ENCODE measurements at regions of chr17 and their contacts with region 1.

Region 1: DNA sequence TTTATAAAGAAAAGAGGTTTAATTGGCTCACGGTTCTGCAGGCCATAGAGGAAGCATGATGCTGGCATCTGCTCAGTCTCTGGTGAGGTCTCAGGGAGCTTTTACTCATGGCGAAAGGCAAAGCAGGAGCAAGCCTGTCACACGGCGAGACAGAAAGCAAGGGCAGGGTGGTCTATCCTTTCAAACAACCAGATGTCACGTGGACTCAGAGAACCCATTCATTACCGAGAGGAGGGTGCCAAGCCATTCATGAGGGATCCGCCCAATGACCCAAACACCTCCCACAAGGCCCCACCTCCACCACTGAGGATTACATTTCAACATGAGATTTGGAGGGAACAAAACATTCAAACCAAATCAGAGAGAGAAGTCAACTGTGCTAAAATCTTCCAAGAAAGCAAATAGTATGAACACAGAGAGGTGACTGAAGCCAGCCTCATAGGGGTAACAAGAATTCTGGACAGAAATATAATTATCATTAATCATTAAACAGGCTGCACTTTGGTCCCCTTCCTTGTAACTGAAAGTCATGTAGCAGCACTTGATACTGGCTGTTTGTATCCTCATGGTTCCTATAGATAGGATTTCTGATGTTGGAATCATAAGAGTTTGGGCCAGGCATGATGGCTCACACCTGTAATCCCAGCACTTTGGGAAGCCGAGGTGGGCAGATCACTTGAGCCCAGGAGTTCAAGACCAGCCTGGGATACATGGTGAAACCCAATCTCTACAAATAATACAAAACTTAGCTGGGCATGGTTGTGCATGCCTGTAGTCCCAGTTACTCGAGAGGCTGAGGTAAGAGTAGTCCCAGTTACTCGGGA is 52.5 kb upstream of the B4GALNT2 start:
- DNase-seq: no peak

Region 2: GRCh38 chr17:49016788-49017463 is 63.1 kb before region 1 on chr17:
- intact Hi-C with region 1: no loop called
- DNase-seq: no peak

Region 3: DNA sequence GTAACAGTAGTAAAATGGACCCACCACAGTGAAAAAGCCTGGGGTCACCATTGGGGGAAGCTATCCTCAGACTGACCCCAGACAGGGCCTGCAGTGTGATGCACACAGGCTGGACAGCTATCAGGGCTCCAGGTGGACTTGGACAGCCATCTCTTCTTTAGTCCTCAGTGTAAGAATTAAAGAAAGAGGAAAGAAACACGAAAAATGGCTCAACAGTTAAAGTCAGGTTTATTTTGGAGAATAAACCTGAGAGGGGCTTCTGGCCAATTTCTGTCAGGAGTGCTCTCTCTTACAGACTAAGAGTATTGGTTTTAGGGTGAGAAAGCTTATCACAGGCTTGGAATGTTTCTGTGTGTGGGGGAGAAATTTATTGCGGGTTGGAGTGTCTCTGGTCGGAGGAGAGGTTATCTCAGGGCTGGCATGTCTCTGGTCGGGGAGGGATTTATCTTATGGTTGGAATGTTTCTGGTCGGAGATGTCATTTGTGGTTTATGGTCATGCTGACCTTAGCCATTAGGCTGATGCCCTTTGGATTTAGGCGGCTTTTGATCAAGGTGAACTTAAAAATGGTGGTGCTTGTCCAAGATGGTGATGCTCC is 41.7 kb after region 1 on chr17:
- intact Hi-C with region 1: loop called (anchors 2 kb)
- DNase-seq: no peak

Measured in posterior cingulate gyrus (tissue), 11 donors.